MCF 10A (cell line): ENCODE measurements at regions of chr17 and their contacts with region 1.

Region 1: GRCh38 chr17:36948717-36949460 is at the start of gene AATF:
- DNase-seq: peak; percentile 97
- H3K4me3 Mint-ChIP-seq: peak within 1 kb of the TSS; percentile 79
- H3K27ac Mint-ChIP-seq: peak within 1 kb of the TSS; percentile 99
- H3K4me1 Mint-ChIP-seq: peaks cover 30% of the 10 kb centered on the region
- H3K27me3 Mint-ChIP-seq: peaks cover 3% of the 10 kb centered on the region
- CTCF ChIP-seq: no peak
- total RNA-seq, gene AATF: 68.9 and 85.2 TPM in 2 replicates

Region 2: DNA sequence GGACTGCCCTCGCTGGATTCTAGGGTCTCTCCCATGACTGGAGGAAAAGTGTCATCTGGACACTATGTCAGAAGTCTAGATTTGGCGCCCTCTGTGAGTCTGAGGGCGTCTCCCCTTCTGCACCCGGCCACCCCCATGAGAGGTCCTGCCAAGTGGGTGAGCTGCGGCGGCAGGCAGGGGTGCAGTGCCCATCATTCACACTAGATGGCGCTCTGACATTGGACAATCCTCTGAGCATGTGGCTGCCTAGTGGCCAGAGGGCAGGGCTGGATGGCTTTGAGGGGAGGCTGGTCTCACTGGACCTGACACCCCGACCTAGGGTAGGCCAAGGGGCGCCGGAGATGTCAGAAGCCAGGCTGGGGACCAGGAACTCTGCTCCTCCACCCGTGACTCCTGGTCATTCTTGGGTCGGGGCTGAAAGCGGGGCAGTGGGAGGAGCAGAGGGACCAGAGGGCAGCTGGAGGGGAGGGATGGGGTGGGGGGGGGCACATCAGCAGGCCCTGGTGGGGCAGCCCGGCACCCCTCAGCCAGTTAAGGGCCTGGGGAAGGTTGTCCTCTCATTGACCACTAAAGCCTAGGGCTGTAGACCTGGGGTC is 319.5 kb before region 1 on chr17:
- CTCF ChIA-PET with region 1: no interaction called
- POLR2A ChIA-PET with region 1: no interaction called
- intact Hi-C with region 1: loop called (anchors 1 kb)
- DNase-seq: peak; percentile 70
- H3K4me3 Mint-ChIP-seq: no peak overlapping the region
- H3K27ac Mint-ChIP-seq: no peak overlapping the region
- H3K4me1 Mint-ChIP-seq: no peaks in the 10 kb centered on the region
- H3K27me3 Mint-ChIP-seq: peaks cover 34% of the 10 kb centered on the region
- CTCF ChIP-seq: peak; percentile 99

Region 3: DNA sequence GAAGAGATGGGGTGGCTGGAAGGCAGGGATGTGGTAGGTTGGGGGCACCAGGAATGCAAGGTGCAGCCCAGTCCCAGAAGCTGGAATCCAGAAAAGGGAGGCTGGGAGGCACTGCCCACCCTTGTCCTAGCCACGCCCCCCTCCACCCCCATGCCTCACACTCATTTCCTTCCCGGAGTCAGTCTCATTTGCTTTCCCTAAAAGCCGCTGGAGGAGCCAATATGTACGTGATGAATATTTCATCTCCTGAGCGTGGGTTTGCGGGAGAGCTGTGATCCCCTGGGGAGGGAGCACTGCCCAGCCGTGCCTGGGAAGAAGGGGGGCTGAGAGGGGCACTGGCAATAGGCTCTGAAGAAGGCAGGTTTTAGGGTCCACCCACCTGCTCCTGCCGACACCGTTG is 136.1 kb before region 1 on chr17:
- CTCF ChIA-PET with region 1: no interaction called
- POLR2A ChIA-PET with region 1: no interaction called
- intact Hi-C with region 1: no loop called
- DNase-seq: no peak
- H3K4me3 Mint-ChIP-seq: no peak overlapping the region
- H3K27ac Mint-ChIP-seq: peak overlapping the region; percentile 66
- H3K4me1 Mint-ChIP-seq: no peaks in the 10 kb centered on the region
- H3K27me3 Mint-ChIP-seq: peaks cover 65% of the 10 kb centered on the region
- CTCF ChIP-seq: no peak

Region 4: DNA sequence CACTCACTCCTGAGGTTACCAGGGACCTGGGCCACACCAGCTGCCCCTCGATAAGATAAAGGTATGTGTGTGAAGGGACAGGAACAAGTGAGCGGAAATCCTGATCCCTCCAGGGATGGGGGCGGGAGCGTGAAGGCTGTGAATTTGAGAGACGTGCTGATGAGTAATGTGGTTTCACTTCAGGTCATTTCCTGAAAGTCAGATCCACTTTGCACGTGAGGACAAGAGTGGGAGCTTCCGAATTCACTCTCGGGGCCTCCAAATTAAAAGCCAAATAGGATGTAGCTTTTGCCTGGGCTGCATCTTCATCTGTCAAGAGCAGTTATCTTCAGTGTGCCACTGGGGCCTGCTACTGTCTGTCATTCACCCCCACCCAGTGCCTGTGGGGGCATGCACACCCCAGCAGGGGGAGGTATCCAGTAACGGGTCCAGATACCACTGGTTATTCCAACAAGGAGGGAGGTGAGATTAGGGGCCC is 99.0 kb before region 1 on chr17:
- CTCF ChIA-PET with region 1: no interaction called
- POLR2A ChIA-PET with region 1: interaction called, 9 read pairs
- intact Hi-C with region 1: loop called (anchors 1 kb)
- DNase-seq: peak; percentile 91
- H3K4me3 Mint-ChIP-seq: no peak overlapping the region
- H3K27ac Mint-ChIP-seq: peak overlapping the region; percentile 94
- H3K4me1 Mint-ChIP-seq: peaks cover 18% of the 10 kb centered on the region
- H3K27me3 Mint-ChIP-seq: no peaks in the 10 kb centered on the region
- CTCF ChIP-seq: no peak

Region 5: DNA sequence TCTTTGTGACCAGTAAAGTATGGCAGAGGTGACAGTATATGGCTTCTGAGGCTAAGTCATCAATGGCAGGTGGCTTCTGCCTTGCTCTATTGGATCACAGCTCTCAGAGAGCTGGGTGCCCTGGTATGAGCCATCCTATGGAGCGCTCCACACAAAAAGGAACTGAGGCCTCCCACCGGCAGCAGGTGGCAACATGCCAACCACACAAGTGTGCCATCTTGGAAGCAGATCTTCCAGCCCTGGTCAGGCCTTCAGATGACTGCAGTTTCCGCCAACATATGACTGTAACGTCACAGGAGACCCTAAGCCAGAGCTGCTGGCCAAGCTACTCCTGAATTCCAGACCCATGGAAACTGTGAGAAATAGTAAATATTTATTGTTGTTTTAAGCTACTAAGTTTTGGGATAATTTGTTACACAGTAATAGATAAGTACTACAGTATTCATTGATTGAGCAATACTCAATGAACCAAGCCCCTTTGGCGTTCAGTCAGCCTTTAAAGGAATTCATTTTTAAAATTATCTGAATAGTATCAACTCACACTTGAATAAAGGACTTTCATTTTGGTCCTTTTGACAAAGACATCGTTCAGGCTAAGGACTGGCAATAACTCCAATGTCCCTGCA is 81.1 kb before region 1 on chr17:
- CTCF ChIA-PET with region 1: no interaction called
- POLR2A ChIA-PET with region 1: no interaction called
- intact Hi-C with region 1: no loop called
- DNase-seq: no peak
- H3K4me3 Mint-ChIP-seq: no peak overlapping the region
- H3K27ac Mint-ChIP-seq: no peak overlapping the region
- H3K4me1 Mint-ChIP-seq: no peaks in the 10 kb centered on the region
- H3K27me3 Mint-ChIP-seq: no peaks in the 10 kb centered on the region
- CTCF ChIP-seq: no peak

Region 6: DNA sequence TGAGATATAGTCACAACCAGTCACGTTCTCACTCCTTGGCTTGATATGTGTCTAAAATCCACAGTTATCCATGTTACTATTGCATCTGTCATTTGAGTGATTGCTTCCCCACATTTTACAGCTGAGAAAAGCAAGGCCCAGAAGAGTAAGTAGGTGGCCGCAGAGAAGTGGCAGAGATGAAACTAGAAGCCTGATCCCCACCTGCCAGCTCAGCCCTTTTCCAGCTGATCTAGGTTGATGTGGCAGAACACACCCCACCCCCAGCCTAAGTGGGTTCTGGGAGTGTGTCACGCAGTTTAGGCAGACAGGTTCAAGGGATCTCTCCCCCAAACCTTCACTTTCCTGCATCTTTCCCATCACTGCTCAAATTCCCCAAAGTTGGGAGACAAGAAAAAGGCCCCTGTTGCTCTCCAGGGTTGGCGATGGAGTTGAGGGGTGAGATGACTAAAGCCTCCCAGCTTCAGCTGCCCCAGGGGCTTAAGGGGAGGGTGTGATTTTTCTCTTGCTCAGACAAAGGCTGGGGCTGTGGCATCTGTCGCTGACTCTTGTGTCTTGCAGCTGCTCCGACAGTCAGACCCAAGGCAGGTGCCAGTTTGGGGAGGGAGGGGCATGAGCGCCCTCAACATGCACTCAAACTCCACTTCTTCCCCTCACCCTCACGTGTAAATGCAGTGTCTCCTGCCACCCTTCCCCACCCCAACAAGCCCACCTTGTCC is 60.5 kb before region 1 on chr17:
- CTCF ChIA-PET with region 1: no interaction called
- POLR2A ChIA-PET with region 1: no interaction called
- intact Hi-C with region 1: no loop called
- DNase-seq: no peak
- H3K4me3 Mint-ChIP-seq: no peak overlapping the region
- H3K27ac Mint-ChIP-seq: no peak overlapping the region
- H3K4me1 Mint-ChIP-seq: no peaks in the 10 kb centered on the region
- H3K27me3 Mint-ChIP-seq: no peaks in the 10 kb centered on the region
- CTCF ChIP-seq: no peak

Region 7: DNA sequence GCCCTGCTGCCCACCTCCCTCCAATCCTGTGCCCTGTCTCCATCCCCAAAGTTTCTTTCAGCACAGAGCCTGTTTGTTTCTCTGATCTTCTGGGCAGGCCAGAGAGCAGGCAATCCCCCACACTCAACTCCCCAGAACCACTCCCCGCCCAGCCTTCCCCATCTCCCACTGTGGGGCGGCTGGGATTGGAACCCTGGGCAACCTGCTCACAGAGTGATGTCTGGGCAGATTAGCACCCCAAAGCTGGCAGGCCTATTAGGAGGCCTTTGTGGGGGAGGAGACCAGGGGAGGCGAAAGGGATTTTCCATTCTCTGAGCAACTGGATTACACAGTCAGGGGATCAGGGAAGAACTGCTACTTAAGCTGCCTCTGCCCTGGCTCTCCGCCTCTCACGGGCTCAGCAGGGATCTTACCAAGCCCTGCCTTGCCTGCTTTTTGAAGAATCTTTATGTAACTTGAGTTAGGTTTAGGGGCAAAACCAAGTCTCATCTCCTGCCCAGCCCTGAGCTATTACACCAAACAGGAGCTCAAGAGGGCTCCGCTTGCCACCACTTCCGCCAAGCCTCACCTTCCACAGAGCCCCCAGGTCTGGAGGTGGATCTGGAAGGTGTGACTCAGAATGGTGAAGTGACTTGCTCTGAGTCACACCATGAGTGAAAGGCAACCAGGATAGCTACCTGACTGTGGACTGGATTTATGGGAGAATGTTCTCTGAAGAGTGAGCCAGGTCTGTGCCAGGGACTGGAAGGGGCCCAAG is 27.6 kb before region 1 on chr17:
- CTCF ChIA-PET with region 1: interaction called, 3 read pairs
- POLR2A ChIA-PET with region 1: interaction called, 25 read pairs
- intact Hi-C with region 1: loop called (anchors 1 kb)
- DNase-seq: peak; percentile 95
- H3K4me3 Mint-ChIP-seq: peak overlapping the region; percentile 53
- H3K27ac Mint-ChIP-seq: peak overlapping the region; percentile 63
- H3K4me1 Mint-ChIP-seq: peaks cover 31% of the 10 kb centered on the region
- H3K27me3 Mint-ChIP-seq: no peaks in the 10 kb centered on the region
- CTCF ChIP-seq: no peak

Region 8: GRCh38 chr17:36980280-36980761 is 31.4 kb after region 1 on chr17:
- CTCF ChIA-PET with region 1: no interaction called
- POLR2A ChIA-PET with region 1: interaction called, 16 read pairs
- intact Hi-C with region 1: no loop called
- DNase-seq: peak; percentile 62
- H3K4me3 Mint-ChIP-seq: no peak overlapping the region
- H3K27ac Mint-ChIP-seq: peak overlapping the region; percentile 63
- H3K4me1 Mint-ChIP-seq: peaks cover 27% of the 10 kb centered on the region
- H3K27me3 Mint-ChIP-seq: no peaks in the 10 kb centered on the region
- CTCF ChIP-seq: no peak